ENCODE measurements at regions of chrX and their contacts with region 1.

Region 1: GRCh38 chrX:40468033-40468846 is 112.5 kb upstream of the ATP6AP2 start:
- DNase-seq: peak in 1 of 2 donors; percentile 61
- ATAC-seq: peak; percentile 59
- H3K4me3 ChIP-seq: no peak overlapping the region
- H3K27ac ChIP-seq: no peak overlapping the region
- H3K4me1 ChIP-seq: no peaks in the 10 kb centered on the region
- H3K27me3 ChIP-seq: no peaks in the 10 kb centered on the region

Region 2: GRCh38 chrX:40281336-40282005 is 186.8 kb before region 1 on chrX:
- intact Hi-C with region 1: loop called in 1 of 2 experiments (anchors 10 kb)
- DNase-seq: no peak
- ATAC-seq: no peak
- H3K4me3 ChIP-seq: no peak overlapping the region
- H3K27ac ChIP-seq: no peak overlapping the region
- H3K4me1 ChIP-seq: peaks cover 0 to 2% of the 10 kb centered on the region in 2 donors
- H3K27me3 ChIP-seq: no peaks in the 10 kb centered on the region

Measured in aorta (tissue), 5 donors.